GM10248 (cell line): ENCODE measurements at regions of chr1 and their contacts with region 1.

Region 1: DNA sequence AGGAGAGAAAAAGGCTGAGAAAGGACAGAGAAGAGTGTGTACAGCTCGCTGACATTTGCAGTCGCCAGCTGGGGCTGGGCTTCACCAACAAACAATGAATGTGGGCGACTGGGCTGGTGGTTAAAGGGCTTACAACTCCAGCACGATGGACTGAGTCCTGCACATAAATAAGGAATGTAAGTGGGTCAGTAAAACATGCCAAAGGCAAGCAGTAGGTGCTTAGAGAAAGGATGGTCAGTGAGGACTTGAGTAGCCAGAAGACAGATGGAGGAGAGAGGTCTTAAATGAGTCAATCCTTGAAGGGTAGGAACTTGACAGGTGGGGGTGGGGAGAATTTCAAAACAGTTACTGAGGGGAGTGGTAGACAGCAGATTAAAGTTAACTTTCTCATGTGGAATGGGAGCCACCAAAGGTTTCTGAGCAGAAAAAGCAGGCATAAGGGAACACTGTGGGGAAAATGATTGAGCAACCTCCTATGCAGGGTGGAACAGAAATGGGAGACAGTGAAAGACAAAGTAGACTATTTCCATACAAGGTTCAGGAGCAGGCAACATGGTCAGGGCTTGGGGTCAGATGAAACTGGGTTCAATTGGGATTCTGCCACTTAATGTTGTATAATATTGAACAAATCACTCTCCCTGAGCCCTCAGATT is 37.4 kb downstream of the GADD45A start:
- DNase-seq: no peak
- CTCF ChIP-seq: no peak

Region 2: DNA sequence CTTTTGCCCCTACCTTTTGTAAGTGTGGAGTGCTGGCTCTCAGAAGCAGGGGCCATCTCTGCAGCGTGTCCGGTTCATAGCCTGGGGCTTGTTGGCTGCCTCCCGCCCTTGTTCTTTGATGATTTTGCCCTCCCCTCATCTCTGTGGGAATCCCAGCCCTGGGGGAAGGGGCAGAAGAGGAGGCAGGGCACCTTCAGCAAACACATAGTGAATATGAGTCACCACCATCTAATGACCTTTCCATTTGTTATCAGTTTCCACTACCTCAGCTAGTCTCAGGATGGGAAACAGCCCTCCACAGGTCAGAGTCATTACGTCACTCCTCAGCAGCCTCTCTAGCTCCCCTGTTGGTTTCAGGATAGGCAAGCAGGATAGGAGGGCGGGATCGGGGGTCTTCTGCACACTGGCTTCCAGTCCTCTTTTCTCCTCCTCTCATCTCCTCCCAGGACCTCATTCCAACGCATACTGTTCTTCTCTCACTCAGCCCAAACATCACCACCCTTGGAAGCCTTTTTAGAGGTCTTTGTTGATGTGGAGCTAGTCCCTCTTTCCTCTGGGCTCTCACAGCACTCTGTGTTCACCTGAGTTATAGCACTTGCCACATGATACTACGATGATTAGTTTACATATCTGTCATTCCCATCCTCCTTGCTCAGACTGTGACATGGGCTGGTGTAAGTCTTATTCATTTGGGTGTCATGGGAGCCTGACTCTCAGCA is 21.6 kb before region 1 on chr1:
- CTCF ChIA-PET with region 1: interaction called, 15 read pairs
- POLR2A ChIA-PET with region 1: no interaction called
- DNase-seq: peak; percentile 43
- CTCF ChIP-seq: no peak